CD4-positive, alpha-beta memory T cell (primary cell): ENCODE measurements at regions of chr15 and their contacts with region 1.

Region 1: GRCh38 chr15:70097337-70098169 is at the start of gene TLE3:
- DNase-seq: peak; percentile 98
- H3K4me3 ChIP-seq: peak within 1 kb of the TSS; percentile 52 to 88
- H3K4me3 Mint-ChIP-seq: peak within 1 kb of the TSS; percentile 95 to 100 (median 98)
- H3K27ac ChIP-seq: peak within 1 kb of the TSS; percentile 88
- H3K27ac Mint-ChIP-seq: peak within 1 kb of the TSS; percentile 98 to 100 (median 99)
- H3K4me1 ChIP-seq: peaks cover 54% of the 10 kb centered on the region
- H3K4me1 Mint-ChIP-seq: peaks cover 32 to 70% (median 45%) of the 10 kb centered on the region in 4 donors
- H3K27me3 ChIP-seq: no peaks in the 10 kb centered on the region
- H3K27me3 Mint-ChIP-seq: peaks cover 2 to 9% of the 10 kb centered on the region in 2 donors
- total RNA-seq, gene TLE3: 118 to 121 TPM

Region 2: DNA sequence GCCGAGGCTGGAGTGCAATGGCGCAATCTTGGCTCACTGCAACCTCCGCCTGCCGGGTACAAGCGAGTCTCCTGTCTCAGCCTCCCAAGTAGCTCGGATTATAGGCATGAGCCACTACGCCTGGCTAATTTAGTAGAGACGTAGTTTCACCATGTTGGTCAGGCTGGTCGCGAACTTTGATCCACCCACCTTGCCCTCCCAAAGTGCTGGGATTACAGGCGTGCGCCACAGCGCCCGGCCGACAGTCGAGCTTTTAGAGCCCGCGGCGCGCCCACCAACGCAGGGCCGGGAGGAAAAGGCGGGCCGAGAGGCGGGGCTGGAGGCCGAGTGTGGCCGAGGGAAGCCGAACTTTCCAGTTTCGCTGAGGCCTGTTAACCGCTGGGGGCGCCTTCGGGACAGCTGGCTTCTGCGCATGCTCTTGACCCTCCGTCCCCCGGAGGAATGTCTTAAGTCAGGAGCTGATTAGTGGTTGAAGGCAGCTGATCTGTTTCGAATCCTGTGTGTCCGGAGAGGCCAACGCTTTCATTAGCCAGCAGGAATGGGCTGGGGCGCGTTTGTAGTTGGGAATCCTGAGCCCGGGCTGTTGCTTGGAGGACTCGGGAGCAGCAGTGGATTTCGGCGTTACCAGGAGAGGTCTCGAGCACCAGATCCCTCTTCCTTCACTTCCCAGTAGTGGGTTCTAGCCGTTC is 634.9 kb before region 1 on chr15:
- CTCF ChIA-PET with region 1: no interaction called
- POLR2A ChIA-PET with region 1: interaction called, 36 read pairs
- intact Hi-C with region 1: no loop called
- DNase-seq: peak; percentile 87 to 90 (median 89)
- H3K4me3 ChIP-seq: peak overlapping the region; percentile 59 to 76
- H3K4me3 Mint-ChIP-seq: peak overlapping the region; percentile 88 to 95 (median 92)
- H3K27ac ChIP-seq: peak overlapping the region; percentile 80
- H3K27ac Mint-ChIP-seq: peak overlapping the region; percentile 89 to 99 (median 96)
- H3K4me1 ChIP-seq: peaks cover 44% of the 10 kb centered on the region
- H3K4me1 Mint-ChIP-seq: peaks cover 17 to 56% (median 33%) of the 10 kb centered on the region in 4 donors
- H3K27me3 ChIP-seq: no peaks in the 10 kb centered on the region
- H3K27me3 Mint-ChIP-seq: no peaks in the 10 kb centered on the region

Region 3: DNA sequence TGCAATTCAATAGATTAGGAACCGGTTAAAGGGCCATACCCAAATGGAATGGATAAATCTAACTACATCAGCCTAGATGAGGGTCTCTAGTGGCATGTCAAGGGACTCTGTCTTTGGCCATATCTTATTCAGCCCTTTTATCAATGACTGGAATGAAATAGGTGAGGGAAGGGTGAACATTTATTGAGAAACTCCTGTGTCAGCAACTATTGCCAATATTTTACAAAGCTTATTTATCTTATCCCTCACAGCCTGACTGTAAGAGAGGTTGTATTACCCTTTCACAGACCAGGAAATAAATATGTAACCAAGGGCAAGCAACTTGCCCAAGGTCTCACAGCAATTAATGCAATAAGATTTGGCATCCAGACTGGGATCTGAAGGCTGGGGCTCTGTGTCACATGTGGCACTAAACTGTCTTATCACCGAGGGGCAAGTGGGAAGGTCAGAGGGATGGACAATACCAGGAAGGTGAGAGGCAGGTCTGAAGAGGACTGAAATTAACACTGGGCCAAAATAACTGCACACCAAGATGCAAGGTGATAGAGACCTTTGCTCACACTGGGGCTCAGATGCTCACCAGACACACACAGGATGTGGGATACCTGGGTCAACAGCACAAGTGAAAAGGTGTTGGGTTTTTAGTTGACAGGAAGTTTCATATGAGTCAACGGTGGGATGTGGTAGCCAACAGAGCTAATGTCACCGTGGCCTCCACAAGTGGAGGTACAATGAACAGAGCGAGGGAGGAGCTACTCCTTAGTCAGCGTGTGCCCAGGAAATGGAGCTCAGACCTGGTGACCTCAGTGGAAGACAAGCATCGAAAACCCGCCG is 383.6 kb before region 1 on chr15:
- CTCF ChIA-PET with region 1: interaction called, 6 read pairs
- POLR2A ChIA-PET with region 1: interaction called, 144 read pairs
- intact Hi-C with region 1: loop called (anchors 2 kb)
- DNase-seq: peak; percentile 80 to 92 (median 85)
- H3K4me3 ChIP-seq: no peak overlapping the region
- H3K4me3 Mint-ChIP-seq: peak overlapping the region; percentile 54 to 88 (median 73)
- H3K27ac ChIP-seq: peak overlapping the region; percentile 11
- H3K27ac Mint-ChIP-seq: peak overlapping the region; percentile 81 to 95 (median 90)
- H3K4me1 ChIP-seq: peaks cover 73% of the 10 kb centered on the region
- H3K4me1 Mint-ChIP-seq: peaks cover 47 to 76% (median 64%) of the 10 kb centered on the region in 4 donors
- H3K27me3 ChIP-seq: no peaks in the 10 kb centered on the region
- H3K27me3 Mint-ChIP-seq: no peaks in the 10 kb centered on the region

Region 4: DNA sequence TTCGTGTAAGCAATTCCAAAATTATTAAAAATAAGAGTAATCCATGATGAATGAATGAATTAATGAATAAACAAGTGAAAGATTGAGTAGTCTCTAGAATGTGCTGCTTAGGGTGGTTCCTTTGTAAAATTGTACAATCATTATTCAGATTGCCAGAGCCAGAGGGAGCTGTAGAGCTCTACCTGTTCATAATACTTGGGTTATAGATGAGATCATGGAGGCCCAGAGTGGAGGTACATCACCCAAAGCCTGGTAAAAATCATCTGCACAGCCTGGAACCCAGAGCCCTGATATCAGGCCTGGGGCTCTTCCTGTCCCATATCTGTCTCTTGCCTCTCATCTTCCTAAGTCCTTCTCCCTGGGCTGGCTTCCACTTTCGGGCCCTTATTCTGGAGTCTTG is 347.8 kb before region 1 on chr15:
- CTCF ChIA-PET with region 1: interaction called, 6 read pairs
- POLR2A ChIA-PET with region 1: interaction called, 285 read pairs
- intact Hi-C with region 1: no loop called
- DNase-seq: peak in 3 of 5 donors; percentile 21 to 35 (median 26)
- H3K4me3 ChIP-seq: no peak overlapping the region
- H3K4me3 Mint-ChIP-seq: no peak overlapping the region
- H3K27ac ChIP-seq: no peak overlapping the region
- H3K27ac Mint-ChIP-seq: no peak overlapping the region
- H3K4me1 ChIP-seq: peaks cover 24% of the 10 kb centered on the region
- H3K4me1 Mint-ChIP-seq: peaks cover 18 to 47% (median 28%) of the 10 kb centered on the region in 4 donors
- H3K27me3 ChIP-seq: no peaks in the 10 kb centered on the region
- H3K27me3 Mint-ChIP-seq: peaks cover 0 to 5% of the 10 kb centered on the region in 2 donors

Region 5: GRCh38 chr15:70259028-70259424 is 161.5 kb after region 1 on chr15:
- CTCF ChIA-PET with region 1: interaction called, 6 read pairs
- POLR2A ChIA-PET with region 1: interaction called, 26 read pairs
- intact Hi-C with region 1: loop called (anchors 2 kb)
- DNase-seq: peak; percentile 47 to 64 (median 52)
- H3K4me3 ChIP-seq: peak overlapping the region; percentile 43 to 49
- H3K4me3 Mint-ChIP-seq: peak overlapping the region; percentile 68 to 92 (median 80)
- H3K27ac ChIP-seq: peak overlapping the region; percentile 29
- H3K27ac Mint-ChIP-seq: peak overlapping the region; percentile 77 to 93 (median 85)
- H3K4me1 ChIP-seq: peaks cover 38% of the 10 kb centered on the region
- H3K4me1 Mint-ChIP-seq: peaks cover 38 to 63% (median 45%) of the 10 kb centered on the region in 4 donors
- H3K27me3 ChIP-seq: no peaks in the 10 kb centered on the region
- H3K27me3 Mint-ChIP-seq: no peaks in the 10 kb centered on the region

Region 6: GRCh38 chr15:70488002-70488605 is 390.6 kb after region 1 on chr15:
- CTCF ChIA-PET with region 1: interaction called, 4 read pairs
- POLR2A ChIA-PET with region 1: interaction called, 54 read pairs
- intact Hi-C with region 1: loop called (anchors 1 kb)
- DNase-seq: peak; percentile 61 to 74 (median 62)
- H3K4me3 ChIP-seq: no peak overlapping the region
- H3K4me3 Mint-ChIP-seq: peak overlapping the region in 2 of 8 donors; percentile 2 to 15
- H3K27ac ChIP-seq: no peak overlapping the region
- H3K27ac Mint-ChIP-seq: peak overlapping the region in 1 of 7 donors; percentile 3
- H3K4me1 ChIP-seq: peaks cover 65% of the 10 kb centered on the region
- H3K4me1 Mint-ChIP-seq: peaks cover 41 to 85% (median 50%) of the 10 kb centered on the region in 4 donors
- H3K27me3 ChIP-seq: no peaks in the 10 kb centered on the region
- H3K27me3 Mint-ChIP-seq: peaks cover 2 to 10% of the 10 kb centered on the region in 2 donors